ENCODE measurements at regions of chr12 and their contacts with region 1.

Region 1: GRCh38 chr12:111685744-111686517 is at the starts of genes ACAD10 and BRAP:
- DNase-seq: peak; percentile 96
- H3K4me3 Mint-ChIP-seq: peak within 1 kb of the TSS; percentile 97
- H3K27ac Mint-ChIP-seq: peak within 1 kb of the TSS; percentile 98
- H3K4me1 Mint-ChIP-seq: peaks cover 31% of the 10 kb centered on the region
- H3K27me3 Mint-ChIP-seq: no peaks in the 10 kb centered on the region
- total RNA-seq, gene ACAD10: 21.2 and 24.2 TPM in 2 replicates
- total RNA-seq, gene BRAP: 22.1 and 22.2 TPM in 2 replicates

Region 2: GRCh38 chr12:111174251-111174960 is 511.5 kb before region 1 on chr12:
- intact Hi-C with region 1: no loop called
- DNase-seq: no peak
- H3K4me3 Mint-ChIP-seq: no peak overlapping the region
- H3K27ac Mint-ChIP-seq: no peak overlapping the region
- H3K4me1 Mint-ChIP-seq: no peaks in the 10 kb centered on the region
- H3K27me3 Mint-ChIP-seq: peaks cover 3% of the 10 kb centered on the region

Region 3: GRCh38 chr12:111451649-111452129 is 234.2 kb before region 1 on chr12:
- intact Hi-C with region 1: loop called (anchors 5 kb)
- DNase-seq: peak; percentile 21
- H3K4me3 Mint-ChIP-seq: peak overlapping the region; percentile 15
- H3K27ac Mint-ChIP-seq: no peak overlapping the region
- H3K4me1 Mint-ChIP-seq: peaks cover 50% of the 10 kb centered on the region
- H3K27me3 Mint-ChIP-seq: no peaks in the 10 kb centered on the region

Region 4: GRCh38 chr12:111599459-111600204 is 86.3 kb before region 1 on chr12:
- intact Hi-C with region 1: loop called (anchors 1 kb)
- DNase-seq: peak; percentile 80
- H3K4me3 Mint-ChIP-seq: peak overlapping the region; percentile 79
- H3K27ac Mint-ChIP-seq: peak overlapping the region; percentile 68
- H3K4me1 Mint-ChIP-seq: peaks cover 29% of the 10 kb centered on the region
- H3K27me3 Mint-ChIP-seq: no peaks in the 10 kb centered on the region

Region 5: DNA sequence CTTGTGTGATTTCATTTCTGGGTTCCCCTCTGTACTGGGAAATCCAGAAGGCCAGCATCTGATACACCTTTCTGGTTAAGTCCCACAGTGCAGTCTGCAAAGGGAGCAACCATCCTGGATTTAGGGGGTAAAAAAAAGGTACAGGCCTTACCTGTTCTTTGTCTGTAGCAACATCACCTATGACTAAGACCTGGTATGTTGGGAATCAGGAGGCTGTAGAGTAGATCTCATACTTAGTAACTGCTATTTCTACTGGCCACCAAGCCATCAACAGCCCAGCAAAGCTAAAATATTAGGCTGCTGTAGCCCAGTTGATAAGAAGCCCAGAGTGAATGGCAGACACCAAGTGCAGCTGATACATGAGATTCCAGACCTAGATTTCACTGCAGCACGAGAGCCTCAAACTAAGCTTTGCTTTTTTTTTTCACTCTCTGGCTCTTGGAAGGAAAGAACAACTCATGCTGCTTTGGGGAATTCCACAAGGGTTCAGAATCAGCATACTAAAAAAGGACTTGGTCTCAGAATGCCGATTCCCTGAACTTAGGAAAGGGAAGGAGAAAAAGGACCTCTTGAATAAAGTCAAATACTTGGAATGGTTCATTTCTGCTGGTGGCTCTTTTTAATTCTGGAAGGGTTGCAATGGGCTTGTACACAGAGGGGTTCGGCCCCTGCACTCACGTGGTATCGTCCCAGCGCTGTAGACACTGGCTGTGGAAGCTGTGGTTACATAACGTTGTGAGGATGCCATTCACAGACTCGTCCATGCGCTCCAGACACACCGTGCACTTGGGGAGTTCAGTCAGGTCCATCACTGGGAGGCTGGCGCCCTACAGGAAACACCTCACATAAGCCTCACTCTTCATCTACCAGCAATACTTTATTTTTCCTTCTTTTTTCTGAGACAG is 20.7 kb before region 1 on chr12:
- intact Hi-C with region 1: no loop called
- DNase-seq: no peak
- H3K4me3 Mint-ChIP-seq: no peak overlapping the region
- H3K27ac Mint-ChIP-seq: no peak overlapping the region
- H3K4me1 Mint-ChIP-seq: no peaks in the 10 kb centered on the region
- H3K27me3 Mint-ChIP-seq: no peaks in the 10 kb centered on the region

Region 6: DNA sequence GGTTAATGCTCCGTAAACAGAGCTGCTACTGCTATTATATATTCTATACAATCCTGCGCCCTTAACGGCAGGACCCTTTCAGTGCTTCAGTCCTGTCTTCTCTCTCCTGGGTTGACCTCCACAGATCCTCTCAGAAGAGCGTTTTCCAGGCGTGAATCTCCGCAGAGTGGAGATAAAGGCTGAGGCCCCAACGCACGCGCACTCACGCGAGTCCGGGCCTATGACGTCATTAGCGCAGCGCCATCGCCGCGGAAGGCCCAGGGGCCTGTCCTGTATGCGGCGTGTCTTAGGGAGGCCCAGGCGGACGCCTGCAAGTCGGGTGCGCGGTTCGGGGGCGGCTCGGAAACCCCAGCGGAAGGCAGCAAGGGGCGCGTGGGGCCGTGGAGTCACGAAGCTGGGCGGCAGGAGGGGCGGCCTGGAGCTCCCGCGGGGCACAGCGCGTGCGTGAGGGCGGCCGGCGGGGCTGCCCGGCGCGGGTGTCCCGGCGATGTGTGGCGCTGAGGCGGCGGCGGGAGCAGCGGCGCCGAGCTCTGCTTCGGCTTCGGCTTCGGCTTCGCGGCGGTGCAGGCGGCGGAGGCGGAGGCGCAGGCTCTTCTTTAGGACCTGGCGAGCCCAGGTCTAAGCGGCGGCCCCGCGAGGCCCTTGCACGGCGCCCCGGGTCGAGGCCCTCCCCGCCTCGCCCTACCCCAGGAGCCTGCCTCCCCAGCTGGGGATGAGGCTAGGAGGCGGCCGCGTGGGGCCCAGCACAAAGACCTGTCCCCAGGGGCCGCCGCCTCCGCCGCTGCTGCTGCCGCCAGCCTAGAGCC is 156.0 kb after region 1 on chr12 and contains the start of gene MAPKAPK5:
- intact Hi-C with region 1: loop called (anchors 1 kb)
- DNase-seq: peak; percentile 95
- H3K4me3 Mint-ChIP-seq: peak within 1 kb of the TSS; percentile 98
- H3K27ac Mint-ChIP-seq: peak within 1 kb of the TSS; percentile 99
- H3K4me1 Mint-ChIP-seq: peaks cover 49% of the 10 kb centered on the region
- H3K27me3 Mint-ChIP-seq: no peaks in the 10 kb centered on the region
- total RNA-seq, gene MAPKAPK5: 82.1 and 86.5 TPM in 2 replicates

Region 7: GRCh38 chr12:111937429-111937828 is 251.5 kb after region 1 on chr12:
- intact Hi-C with region 1: no loop called
- DNase-seq: no peak
- H3K4me3 Mint-ChIP-seq: no peak overlapping the region
- H3K27ac Mint-ChIP-seq: no peak overlapping the region
- H3K4me1 Mint-ChIP-seq: peaks cover 1% of the 10 kb centered on the region
- H3K27me3 Mint-ChIP-seq: no peaks in the 10 kb centered on the region

Region 8: DNA sequence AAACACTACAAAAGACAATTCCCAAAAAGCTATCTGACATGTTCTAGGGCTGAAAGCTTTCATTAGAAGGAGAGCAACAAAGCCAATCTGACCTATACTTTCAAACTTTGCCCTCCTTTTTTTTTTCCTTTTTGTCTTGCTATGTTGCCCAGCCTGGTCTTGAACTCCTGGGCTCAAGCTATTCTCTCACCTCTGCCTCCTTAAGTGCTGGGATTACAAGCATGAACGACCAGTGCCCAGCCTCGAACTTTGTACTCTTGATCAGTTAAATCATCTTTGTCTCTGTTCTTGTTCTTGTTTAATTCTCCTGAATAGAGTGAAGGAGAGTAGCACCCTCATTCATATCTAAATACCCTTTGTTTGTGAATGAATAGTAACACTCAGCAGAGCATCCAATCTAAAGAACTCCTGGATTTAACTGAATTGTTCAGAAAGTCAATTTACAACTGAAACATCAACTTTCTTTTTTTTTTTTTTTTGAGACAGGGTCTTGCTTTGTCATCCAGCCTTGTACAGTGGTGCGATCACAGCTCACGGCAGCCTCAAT is 349.4 kb after region 1 on chr12:
- intact Hi-C with region 1: no loop called
- DNase-seq: no peak
- H3K4me3 Mint-ChIP-seq: no peak overlapping the region
- H3K27ac Mint-ChIP-seq: no peak overlapping the region
- H3K4me1 Mint-ChIP-seq: peaks cover 6% of the 10 kb centered on the region
- H3K27me3 Mint-ChIP-seq: no peaks in the 10 kb centered on the region

Region 9: GRCh38 chr12:112418608-112419298 is 732.8 kb after region 1 on chr12 and contains the start of gene PTPN11:
- intact Hi-C with region 1: loop called (anchors 10 kb)
- DNase-seq: peak; percentile 88
- H3K4me3 Mint-ChIP-seq: peak within 1 kb of the TSS; percentile 96
- H3K27ac Mint-ChIP-seq: peak within 1 kb of the TSS; percentile 99
- H3K4me1 Mint-ChIP-seq: peaks cover 49% of the 10 kb centered on the region
- H3K27me3 Mint-ChIP-seq: peaks cover 2% of the 10 kb centered on the region
- total RNA-seq, gene PTPN11: 163 TPM in 2 replicates